Left cardiac atrium (tissue), 4 donors: ENCODE measurements at regions of chr15 and their contacts with region 1.

Region 1: DNA sequence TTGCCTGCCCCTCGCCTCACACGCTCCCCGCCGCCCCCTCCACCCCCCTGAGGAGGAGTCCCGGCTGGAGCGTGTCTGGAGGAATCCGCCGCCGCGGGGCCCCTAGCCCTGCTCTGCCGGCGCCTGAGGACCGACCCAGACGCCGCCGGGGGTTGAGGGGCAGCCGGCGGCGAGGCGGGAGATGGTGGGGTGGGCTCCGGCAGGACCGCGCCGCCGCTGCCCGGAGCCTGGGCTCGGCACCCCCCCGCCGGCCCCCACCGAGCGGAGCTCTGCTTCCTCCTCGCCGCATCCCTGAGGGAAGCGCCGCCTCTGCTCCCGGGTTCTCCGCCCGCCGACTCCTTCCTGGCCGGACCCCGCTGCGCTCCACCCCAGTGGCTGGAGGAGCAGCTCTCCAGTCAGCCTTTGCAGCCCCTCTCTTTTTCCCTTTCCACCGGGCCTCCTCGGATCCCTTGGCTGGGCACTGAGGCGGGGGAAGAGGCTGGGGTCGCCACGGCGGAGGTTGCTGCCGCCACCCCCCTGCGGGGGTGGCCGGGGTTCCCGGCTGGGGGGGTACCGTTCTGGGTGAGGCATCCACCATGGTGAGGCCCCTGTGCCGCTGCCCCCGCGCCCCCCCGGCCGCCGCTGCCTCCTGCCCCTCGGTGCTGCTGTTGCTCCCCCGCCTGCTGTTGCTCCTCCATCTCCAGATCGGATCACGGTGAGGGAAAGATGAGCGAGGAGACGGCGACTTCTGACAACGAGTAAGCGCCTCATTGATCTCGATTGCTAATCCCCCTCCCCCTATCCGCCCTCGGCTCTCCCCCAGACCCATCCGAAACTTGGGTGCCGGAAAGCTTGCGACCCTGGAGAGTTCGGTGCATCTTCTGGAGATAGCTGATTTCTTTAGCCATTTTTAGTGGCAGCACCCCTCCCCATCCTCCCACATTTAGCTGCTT is at the start of gene SPRED1:
- DNase-seq: peak; percentile 84
- ATAC-seq: peak; percentile 73 to 84
- total RNA-seq, gene SPRED1: 16.1 to 19.9 TPM

Region 2: DNA sequence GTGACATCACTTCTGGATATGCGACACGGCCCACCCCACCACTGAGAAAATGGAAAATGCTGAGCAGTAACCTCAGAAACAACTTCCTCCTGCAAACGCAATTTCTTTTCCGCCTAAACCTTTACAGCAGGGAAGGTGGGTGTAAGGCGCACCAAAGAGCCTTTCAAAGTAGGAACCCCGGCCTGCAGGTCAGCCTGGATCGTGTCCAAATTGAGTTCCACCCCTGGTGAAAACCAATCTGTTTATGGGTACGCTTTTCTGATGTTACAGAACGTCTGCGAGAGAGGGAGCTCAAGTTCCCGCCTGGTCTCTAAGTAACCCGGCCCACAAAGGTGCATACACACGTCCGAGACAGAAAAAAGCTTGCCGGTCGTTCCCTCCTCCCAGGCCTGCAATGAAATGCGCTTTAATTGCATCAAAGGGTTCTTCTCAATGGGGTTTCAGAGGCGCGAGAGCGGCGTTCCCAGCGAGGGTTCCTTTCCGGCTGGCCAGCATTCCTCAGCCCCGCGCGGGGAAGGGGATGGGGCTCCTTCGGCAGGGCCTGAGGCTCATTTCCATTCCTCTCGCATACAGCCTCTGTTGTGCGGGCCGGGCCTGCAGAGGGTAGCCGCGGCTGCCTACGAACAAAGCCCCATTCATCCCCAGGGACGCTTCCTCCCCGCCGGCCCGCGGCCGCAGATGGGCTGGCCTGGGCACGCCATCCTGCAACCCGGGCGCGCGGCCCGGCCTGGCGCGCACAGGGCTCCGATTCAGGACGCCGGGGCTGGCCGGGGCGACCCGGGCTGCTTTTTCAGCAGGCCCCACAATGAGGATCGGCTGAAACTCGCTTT is 180.2 kb before region 1 on chr15:
- intact Hi-C with region 1: loop called in 1 of 2 experiments (anchors 5 kb)
- DNase-seq: peak; percentile 75
- ATAC-seq: peak; percentile 88 to 94

Region 3: GRCh38 chr15:38300395-38300794 is 47.6 kb after region 1 on chr15:
- intact Hi-C with region 1: loop called in 1 of 2 experiments (anchors 10 kb)
- DNase-seq: no peak
- ATAC-seq: no peak